Left cardiac atrium (tissue), 4 donors: ENCODE measurements at regions of chr20 and their contacts with region 1.

Region 1: DNA sequence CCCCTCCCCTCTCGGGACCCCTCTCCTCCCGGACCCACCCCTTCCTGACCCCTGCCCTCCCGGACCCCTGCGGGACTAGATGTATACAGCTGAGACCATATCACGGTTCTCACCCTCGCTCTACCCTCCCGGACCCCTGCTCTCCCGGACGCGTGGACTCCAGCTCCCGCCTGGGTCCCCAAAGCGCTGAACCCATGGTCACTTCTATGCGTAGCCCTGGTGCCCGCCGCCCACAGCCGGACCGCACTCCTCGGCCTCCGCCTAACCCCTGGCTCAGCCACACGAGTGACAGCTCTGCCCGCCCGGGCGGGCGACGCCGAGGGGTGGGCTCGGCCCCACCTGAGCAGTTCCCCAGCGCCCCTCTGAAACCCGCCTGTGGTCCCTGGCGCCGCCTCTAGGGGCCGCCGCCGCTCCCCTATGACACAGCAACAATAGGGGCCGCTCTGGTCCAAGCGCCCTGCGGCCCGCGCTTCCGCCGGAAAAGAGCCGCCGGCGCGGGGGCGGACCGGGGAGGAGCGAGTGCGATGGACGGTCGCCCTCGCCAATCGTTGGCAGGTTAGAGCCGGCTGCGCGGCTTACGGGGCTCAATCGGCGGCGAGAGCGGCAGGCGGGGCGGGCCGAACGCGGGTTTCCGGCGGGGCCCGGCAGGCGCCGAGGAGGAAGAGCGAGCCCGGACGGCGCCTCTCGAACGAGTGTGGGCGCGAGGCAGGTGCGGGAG is at the start of gene ADRM1:
- DNase-seq: peak; percentile 96
- ATAC-seq: peak; percentile 92 to 95
- total RNA-seq, gene ADRM1: 57.9 to 76.9 TPM

Region 2: GRCh38 chr20:62352402-62353288 is 50.1 kb after region 1 on chr20:
- intact Hi-C with region 1: loop called in 1 of 2 experiments (anchors 5 kb)
- DNase-seq: peak; percentile 87
- ATAC-seq: peak; percentile 36 to 70

Region 3: DNA sequence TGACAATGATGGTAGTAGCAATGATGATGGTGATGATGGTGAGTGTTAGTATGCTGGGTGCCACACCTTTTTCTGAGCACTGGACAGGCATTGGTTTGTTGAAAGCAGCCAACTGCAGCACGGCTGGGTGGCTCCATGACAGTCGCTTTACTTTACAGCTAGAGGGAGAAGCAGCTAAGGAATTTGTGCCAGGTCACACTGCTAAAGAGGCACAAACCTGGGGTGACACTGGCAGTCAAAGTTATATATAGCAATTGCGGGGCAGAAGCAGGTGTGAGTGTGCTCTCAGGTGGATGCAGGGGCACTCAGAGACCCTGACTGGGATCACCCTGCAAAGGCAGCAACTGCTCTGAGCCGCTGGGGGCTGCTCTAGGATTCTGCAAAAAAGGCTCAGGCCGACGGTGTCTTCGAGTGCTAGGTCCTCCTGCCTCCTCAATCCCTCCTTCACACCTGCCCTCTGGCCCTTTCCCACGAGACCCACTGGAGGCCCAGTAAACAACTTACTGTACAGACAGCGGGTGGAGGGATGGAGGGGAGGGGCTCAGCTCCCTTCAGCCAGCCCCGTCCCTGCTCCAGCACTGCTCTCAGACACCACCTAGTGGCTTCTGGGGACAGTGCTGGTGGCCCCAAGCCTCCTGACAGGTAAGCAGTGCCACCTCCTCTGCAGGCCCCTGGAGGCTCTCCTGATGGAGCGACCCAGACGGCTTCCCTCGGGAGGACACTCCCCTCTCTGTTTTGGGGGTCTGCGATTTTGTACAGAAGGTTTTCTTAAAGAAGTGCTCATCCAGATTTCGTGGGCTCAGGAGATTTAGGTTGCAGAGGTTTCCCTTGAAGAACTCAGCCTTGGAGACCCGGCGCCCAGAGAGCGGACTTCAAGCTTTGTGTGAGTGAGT is 80.1 kb after region 1 on chr20:
- intact Hi-C with region 1: loop called (anchors 2 to 5 kb)
- DNase-seq: peak; percentile 75
- ATAC-seq: peak; percentile 57 to 62

Region 4: DNA sequence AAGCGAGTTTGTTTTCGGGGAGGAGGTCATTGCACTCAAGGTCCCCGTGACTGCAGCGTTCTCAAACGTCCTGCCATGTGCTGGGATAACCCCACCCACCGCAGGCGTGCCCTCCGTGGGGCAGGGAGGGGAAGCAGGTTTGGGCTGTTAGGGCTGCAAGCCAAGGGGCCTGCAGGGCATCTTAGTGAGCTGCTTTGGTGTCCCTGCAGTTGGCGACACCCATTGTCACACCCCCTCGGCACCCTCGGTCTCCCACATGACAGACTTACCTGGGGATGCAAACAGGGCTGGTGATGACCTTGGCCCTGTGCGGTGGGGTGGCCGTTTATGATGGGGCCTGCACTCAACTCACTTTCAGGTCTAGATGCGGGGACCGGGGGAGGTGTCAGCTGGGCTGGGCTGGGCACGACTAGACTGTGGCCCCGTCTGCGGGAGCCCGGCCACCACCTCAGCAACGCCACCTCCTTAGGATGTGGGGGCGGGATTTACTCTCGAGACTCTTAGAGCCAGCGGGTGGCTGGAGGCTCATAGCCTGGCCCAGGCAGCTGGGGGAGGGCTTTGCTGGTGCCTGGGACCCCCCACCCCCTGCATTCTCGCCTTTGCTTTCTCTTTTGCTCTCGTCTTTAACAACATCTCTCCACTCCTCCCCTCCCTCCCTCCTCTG is 179.8 kb after region 1 on chr20:
- intact Hi-C with region 1: loop called in 1 of 2 experiments (anchors 5 kb)
- DNase-seq: no peak
- ATAC-seq: no peak